K562 (cell line): ENCODE measurements at regions of chr17 and their contacts with region 1.

Region 1: GRCh38 chr17:57995076-57995956 is 7.3 kb upstream of the VEZF1 start:
- DNase-seq: peak; percentile 50 to 81 (median 65)
- ATAC-seq: peak; percentile 85
- H3K4me3 ChIP-seq: no peak overlapping the region
- H3K27ac ChIP-seq: no peak overlapping the region; the same call in 2 of the 3 replicates
- H3K4me1 ChIP-seq: peaks cover 2 to 31% of the 10 kb centered on the region in 2 experiments; a peak in 4 of 5 replicates
- H3K27me3 ChIP-seq: no peaks in the 10 kb centered on the region
- CTCF ChIP-seq: peak; percentile 70 to 80 (median 78)
- EP300 ChIP-seq: no peak
- POLR2A ChIP-seq: peak; percentile 79
- RAD21 ChIP-seq: peak; percentile 57 to 72

Region 2: GRCh38 chr17:57849874-57850754 is 145.2 kb before region 1 on chr17 and contains the start of gene MRPS23:
- CTCF ChIA-PET with region 1: no interaction called
- POLR2A ChIA-PET with region 1: interaction called, 7 read pairs
- in situ Hi-C with region 1: loop called (anchors 5 kb)
- intact Hi-C with region 1: no loop called
- DNase-seq: peak; percentile 86 to 99 (median 88)
- ATAC-seq: peak; percentile 88
- H3K4me3 ChIP-seq: peak within 1 kb of the TSS; percentile 67
- H3K27ac ChIP-seq: peak within 1 kb of the TSS; percentile 73
- H3K4me1 ChIP-seq: peaks cover 32 to 36% of the 10 kb centered on the region in 2 experiments
- H3K27me3 ChIP-seq: no peaks in the 10 kb centered on the region
- CTCF ChIP-seq: peak in 1 of 3 experiments; percentile 21; a peak in 1 of 6 replicates
- EP300 ChIP-seq: peak; percentile 75; the same call in 1 of the 2 replicates
- POLR2A ChIP-seq: peak; percentile 95
- RAD21 ChIP-seq: no peak
- polyA plus RNA-seq, gene MRPS23: 233 to 298 TPM

Region 3: DNA sequence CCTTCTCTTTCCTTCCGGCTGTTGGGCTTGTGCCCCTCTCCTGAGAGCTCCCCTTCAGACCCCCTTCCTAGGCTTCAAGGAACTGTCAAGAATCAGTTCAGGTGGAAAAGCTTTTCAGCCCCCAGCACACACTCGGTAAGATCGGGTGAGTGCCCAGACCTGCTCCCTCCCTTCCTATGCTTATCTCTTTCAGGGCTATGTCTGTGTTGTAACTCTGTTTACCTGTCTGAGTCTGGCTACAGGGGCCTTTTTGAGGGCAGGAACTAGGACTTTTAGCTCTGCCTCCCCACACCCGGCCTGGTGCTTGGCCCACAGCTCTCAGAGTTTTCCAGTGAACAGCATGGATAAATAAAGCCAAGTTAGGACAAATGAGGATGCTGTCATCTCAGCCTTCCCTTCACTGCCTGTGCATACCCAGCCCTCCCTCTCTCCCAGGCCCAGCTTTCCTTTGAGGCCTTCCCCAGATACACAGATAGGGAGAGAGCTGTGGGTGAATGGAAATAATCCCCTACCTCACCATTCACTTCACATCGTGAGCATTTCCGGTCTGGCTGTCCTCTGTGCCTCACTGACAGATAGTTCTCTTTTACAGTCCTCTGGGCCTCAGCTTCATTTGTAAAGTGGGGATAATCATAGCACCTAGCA is 139.8 kb before region 1 on chr17:
- CTCF ChIA-PET with region 1: interaction called, 17 read pairs
- POLR2A ChIA-PET with region 1: interaction called, 7 read pairs
- in situ Hi-C with region 1: loop called (anchors 5 kb)
- intact Hi-C with region 1: loop called (anchors 1 kb)
- DNase-seq: no peak
- ATAC-seq: no peak
- H3K4me3 ChIP-seq: no peak overlapping the region
- H3K27ac ChIP-seq: no peak overlapping the region
- H3K4me1 ChIP-seq: peaks cover 25 to 41% of the 10 kb centered on the region in 2 experiments
- H3K27me3 ChIP-seq: peaks cover 0 to 4% of the 10 kb centered on the region in 2 experiments; a peak in 1 of 5 replicates
- CTCF ChIP-seq: no peak
- EP300 ChIP-seq: no peak
- POLR2A ChIP-seq: no peak
- RAD21 ChIP-seq: no peak

Region 4: DNA sequence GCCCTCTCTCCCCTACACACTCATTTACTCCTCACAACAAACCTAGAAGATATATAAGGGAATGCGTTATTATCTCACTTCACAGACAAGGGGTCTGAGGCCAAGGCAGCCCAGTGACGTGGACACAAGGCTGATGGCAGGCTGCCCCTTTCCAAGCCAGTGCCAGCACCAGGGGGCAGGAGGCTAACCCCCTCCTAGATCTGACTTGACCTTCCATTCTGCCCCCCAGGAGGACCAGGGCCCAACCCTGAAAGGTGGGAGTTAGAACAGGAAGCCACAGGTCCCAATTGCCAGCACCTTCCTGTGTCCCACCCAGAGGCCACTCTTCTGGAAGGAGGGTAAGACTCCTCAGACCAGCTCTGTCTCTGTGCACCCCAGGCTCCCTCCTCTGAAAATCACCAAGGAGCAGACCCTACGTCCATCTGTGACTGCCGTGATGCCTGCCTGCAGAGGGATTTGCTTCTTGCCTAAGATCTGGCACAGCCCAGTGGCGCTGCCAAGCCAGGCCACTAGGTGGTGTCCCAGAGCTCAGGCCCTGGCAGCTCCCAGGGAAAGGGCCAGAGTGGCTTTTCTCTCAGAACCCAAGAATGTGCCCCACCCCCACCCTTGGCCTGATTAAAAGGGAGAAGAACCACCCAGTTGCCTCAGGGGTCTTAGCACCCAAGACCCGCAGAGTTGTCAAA is 103.0 kb before region 1 on chr17:
- CTCF ChIA-PET with region 1: interaction called, 4 read pairs
- POLR2A ChIA-PET with region 1: interaction called, 5 read pairs
- in situ Hi-C with region 1: no loop called
- intact Hi-C with region 1: loop called (anchors 1 kb)
- DNase-seq: peak; percentile 82 to 86 (median 84)
- ATAC-seq: peak; percentile 96
- H3K4me3 ChIP-seq: no peak overlapping the region
- H3K27ac ChIP-seq: no peak overlapping the region
- H3K4me1 ChIP-seq: peaks cover 0 to 8% of the 10 kb centered on the region in 2 experiments; a peak in 2 of 5 replicates
- H3K27me3 ChIP-seq: peaks cover 6 to 45% of the 10 kb centered on the region in 2 experiments
- CTCF ChIP-seq: peak; percentile 91 to 98 (median 94)
- EP300 ChIP-seq: no peak
- POLR2A ChIP-seq: no peak
- RAD21 ChIP-seq: peak; percentile 63 to 86

Region 5: DNA sequence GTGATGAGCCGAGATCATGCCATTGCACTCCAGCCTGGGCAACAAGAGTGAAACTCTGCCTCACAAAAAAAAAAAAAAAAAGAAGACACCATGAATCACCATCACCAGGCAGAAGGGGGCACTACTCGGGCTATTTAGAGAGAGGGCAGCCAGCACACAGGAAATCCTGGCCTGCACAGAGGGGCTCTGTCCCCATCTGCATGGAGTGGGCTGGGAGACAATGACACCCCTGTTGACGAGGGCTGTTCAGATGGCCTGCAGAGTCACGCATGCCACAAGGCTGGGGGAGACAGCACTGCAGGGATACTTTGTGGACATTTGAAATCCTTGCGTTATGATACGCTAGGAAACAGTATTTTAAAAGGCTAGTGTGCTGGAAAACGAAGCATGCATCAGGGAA is 88.4 kb before region 1 on chr17:
- CTCF ChIA-PET with region 1: interaction called, 4 read pairs
- POLR2A ChIA-PET with region 1: interaction called, 4 read pairs
- in situ Hi-C with region 1: no loop called
- intact Hi-C with region 1: loop called (anchors 5 kb)
- DNase-seq: peak in 1 of 4 experiments; percentile 24
- ATAC-seq: peak; percentile 81
- H3K4me3 ChIP-seq: no peak overlapping the region
- H3K27ac ChIP-seq: no peak overlapping the region
- H3K4me1 ChIP-seq: peaks cover 0 to 3% of the 10 kb centered on the region in 2 experiments; a peak in 1 of 5 replicates
- H3K27me3 ChIP-seq: peaks cover 15 to 52% of the 10 kb centered on the region in 2 experiments
- CTCF ChIP-seq: peak; percentile 33 to 47 (median 33); a peak in 4 of 6 replicates
- EP300 ChIP-seq: no peak
- POLR2A ChIP-seq: no peak
- RAD21 ChIP-seq: peak in 1 of 2 experiments; percentile 36; a peak in 1 of 4 replicates

Region 6: GRCh38 chr17:57948555-57949428 is 46.5 kb before region 1 on chr17:
- CTCF ChIA-PET with region 1: no interaction called
- POLR2A ChIA-PET with region 1: interaction called, 6 read pairs
- in situ Hi-C with region 1: no loop called
- intact Hi-C with region 1: loop called (anchors 2 kb)
- DNase-seq: peak in 1 of 4 experiments; percentile 37
- ATAC-seq: no peak
- H3K4me3 ChIP-seq: no peak overlapping the region
- H3K27ac ChIP-seq: no peak overlapping the region
- H3K4me1 ChIP-seq: peaks cover 12 to 35% of the 10 kb centered on the region in 2 experiments; a peak in 4 of 5 replicates
- H3K27me3 ChIP-seq: no peaks in the 10 kb centered on the region
- CTCF ChIP-seq: no peak
- EP300 ChIP-seq: no peak
- POLR2A ChIP-seq: no peak
- RAD21 ChIP-seq: no peak

Region 7: GRCh38 chr17:58112970-58113631 is 117.8 kb after region 1 on chr17:
- CTCF ChIA-PET with region 1: interaction called, 3 read pairs
- POLR2A ChIA-PET with region 1: interaction called, 6 read pairs
- in situ Hi-C with region 1: no loop called
- intact Hi-C with region 1: loop called (anchors 5 kb)
- DNase-seq: peak; percentile 63 to 78 (median 70)
- ATAC-seq: peak; percentile 89
- H3K4me3 ChIP-seq: no peak overlapping the region
- H3K27ac ChIP-seq: no peak overlapping the region
- H3K4me1 ChIP-seq: no peaks in the 10 kb centered on the region
- H3K27me3 ChIP-seq: peaks cover 12 to 25% of the 10 kb centered on the region in 2 experiments; a peak in 4 of 5 replicates
- CTCF ChIP-seq: peak; percentile 87 to 95 (median 90)
- EP300 ChIP-seq: no peak
- POLR2A ChIP-seq: no peak
- RAD21 ChIP-seq: peak; percentile 88 to 94